HepG2 (cell line): ENCODE measurements at regions of chr19 and their contacts with region 1.

Region 1: DNA sequence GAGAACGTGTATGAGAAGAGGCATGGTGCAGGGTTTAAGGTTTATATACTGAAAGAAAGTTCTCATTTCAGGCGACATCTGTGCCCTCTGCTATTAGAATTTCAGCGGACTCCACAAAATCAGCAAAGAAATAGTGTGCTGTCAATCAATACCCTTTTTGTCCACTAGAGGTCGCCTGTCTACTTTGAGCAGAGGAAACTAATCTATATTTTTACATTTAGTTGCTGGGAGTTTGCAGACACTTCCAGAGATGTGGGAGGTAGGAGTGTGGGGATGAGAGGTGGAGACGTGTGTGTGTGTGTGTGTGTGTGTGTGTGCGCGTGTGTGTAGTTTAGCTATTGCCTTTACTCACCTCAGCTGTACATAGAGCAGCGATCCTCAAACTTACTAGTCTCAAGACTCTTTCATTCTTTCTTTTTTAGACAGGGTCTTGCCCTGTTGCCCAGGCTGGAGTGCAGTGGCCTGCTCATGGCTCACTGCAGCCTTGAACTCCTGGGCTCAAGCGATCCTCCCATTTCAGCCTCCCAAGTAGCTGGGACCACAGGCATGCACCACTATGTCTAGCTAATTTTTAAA is 9.7 kb downstream of the INAFM1 start:
- DNase-seq: peak; percentile 53
- ATAC-seq: peak; percentile 60; the same call in 2 of the 3 replicates
- H3K4me3 ChIP-seq: no peak overlapping the region
- H3K27ac ChIP-seq: no peak overlapping the region
- H3K4me1 ChIP-seq: peaks cover 11% of the 10 kb centered on the region
- H3K27me3 ChIP-seq: no peaks in the 10 kb centered on the region
- CTCF ChIP-seq: peak; percentile 75
- EP300 ChIP-seq: no peak
- POLR2A ChIP-seq: no peak
- RAD21 ChIP-seq: no peak

Region 2: GRCh38 chr19:47305309-47305751 is 20.9 kb after region 1 on chr19:
- CTCF ChIA-PET with region 1: no interaction called
- POLR2A ChIA-PET with region 1: no interaction called
- in situ Hi-C with region 1: no loop called
- intact Hi-C with region 1: no loop called
- DNase-seq: peak; percentile 81
- ATAC-seq: peak; percentile 76
- H3K4me3 ChIP-seq: peak overlapping the region in 1 of 3 experiments; percentile 13; a peak in 1 of 6 replicates
- H3K27ac ChIP-seq: peak overlapping the region; percentile 32
- H3K4me1 ChIP-seq: peaks cover 27% of the 10 kb centered on the region
- H3K27me3 ChIP-seq: 0 out of 5 replicates have a peak, but pooled peaks cover 0 to 1% of the 10 kb centered on the region in 2 experiments
- CTCF ChIP-seq: peak; percentile 91
- EP300 ChIP-seq: peak in 1 of 2 experiments; percentile 13; a peak in 1 of 4 replicates
- POLR2A ChIP-seq: no peak
- RAD21 ChIP-seq: peak; percentile 35; the same call in 1 of the 2 replicates

Region 3: DNA sequence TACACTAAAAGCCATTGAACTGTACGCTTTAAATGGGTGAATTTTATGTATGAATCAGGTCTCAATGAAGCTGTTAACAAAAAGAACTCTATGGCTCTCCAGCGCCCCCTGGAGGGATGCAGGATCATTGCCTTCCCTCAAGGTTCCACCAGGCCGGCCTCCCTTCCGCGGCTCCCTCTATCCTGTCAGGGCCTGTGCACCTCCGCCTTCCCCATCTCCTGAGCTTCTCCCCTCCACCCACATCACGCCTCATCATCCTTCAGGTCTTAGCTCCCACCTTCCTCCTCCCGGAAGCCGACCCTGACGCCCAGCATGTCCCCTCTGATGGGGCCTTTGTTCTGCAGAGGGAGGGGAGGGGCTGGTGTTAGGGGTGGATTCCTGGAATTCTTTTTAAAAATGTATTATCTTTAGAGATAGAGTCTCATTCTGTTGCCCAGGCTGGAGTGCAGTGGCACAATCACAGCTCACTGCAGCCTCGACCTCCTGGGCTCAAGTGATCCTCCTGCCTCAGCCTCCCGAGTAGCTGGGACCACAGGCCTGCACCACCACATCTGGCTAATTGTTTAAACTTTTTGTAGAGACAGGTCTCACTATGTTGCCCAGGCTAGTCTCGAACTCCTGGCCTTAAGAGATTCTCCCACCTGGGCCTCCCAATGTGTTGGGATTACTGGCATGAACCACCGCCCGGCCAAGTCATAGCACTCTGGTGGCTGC is 107.3 kb after region 1 on chr19:
- CTCF ChIA-PET with region 1: interaction called, 15 read pairs
- POLR2A ChIA-PET with region 1: no interaction called
- in situ Hi-C with region 1: no loop called
- intact Hi-C with region 1: no loop called
- DNase-seq: peak; percentile 58
- ATAC-seq: peak; percentile 89
- H3K4me3 ChIP-seq: no peak overlapping the region
- H3K27ac ChIP-seq: no peak overlapping the region
- H3K4me1 ChIP-seq: no peaks in the 10 kb centered on the region
- H3K27me3 ChIP-seq: peaks cover 0 to 13% of the 10 kb centered on the region in 2 experiments; a peak in 2 of 5 replicates
- CTCF ChIP-seq: peak; percentile 84
- EP300 ChIP-seq: no peak
- POLR2A ChIP-seq: no peak
- RAD21 ChIP-seq: peak; percentile 70

Region 4: DNA sequence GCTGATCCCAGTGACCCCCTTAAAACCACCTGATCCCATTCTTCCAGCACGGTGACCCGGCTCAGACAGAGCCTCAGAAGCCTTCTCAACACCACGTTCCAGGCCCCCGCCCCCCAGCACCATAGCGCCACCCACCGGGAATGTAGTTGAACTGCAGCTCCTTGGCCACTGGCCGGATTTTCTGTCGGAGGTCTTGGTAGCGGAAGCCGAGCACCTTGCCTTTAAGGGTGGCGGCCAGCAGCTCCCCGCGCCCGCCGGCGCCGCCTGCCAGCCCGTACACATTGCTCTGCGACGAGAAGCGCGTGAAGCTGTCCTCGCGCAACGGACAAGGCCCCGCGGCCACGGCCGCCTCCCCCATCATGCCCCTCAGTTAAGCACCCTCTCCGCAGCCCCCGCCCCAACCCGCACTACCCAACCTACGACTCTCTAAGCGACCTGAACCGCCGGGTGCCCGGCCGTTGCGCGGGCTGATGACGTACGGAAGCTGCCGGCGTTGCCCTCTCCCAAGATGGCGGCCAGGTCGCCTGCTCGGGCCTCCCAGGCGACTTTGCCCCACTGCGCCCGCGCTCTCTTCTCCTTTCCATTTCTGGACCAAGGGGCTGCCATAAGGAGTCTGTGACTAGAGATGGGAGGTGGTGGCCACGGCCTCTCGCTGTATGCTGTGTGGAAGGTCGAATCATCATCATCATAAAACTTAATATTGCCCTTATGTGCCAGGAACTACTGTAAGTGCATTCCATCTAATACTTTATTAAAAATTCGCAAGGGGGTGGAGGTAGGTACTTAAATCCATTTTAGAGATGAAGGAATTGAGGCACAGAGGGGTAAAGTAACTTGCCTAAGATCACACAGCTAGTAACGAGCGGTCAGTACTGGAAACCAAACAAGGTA is 199.6 kb after region 1 on chr19 and contains the start of gene KPTN:
- CTCF ChIA-PET with region 1: no interaction called
- POLR2A ChIA-PET with region 1: no interaction called
- in situ Hi-C with region 1: no loop called
- intact Hi-C with region 1: no loop called
- DNase-seq: peak; percentile 77
- ATAC-seq: peak; percentile 86
- H3K4me3 ChIP-seq: peak within 1 kb of the TSS; percentile 86 to 98 (median 87)
- H3K27ac ChIP-seq: peak within 1 kb of the TSS; percentile 87
- H3K4me1 ChIP-seq: peaks cover 12% of the 10 kb centered on the region
- H3K27me3 ChIP-seq: no peaks in the 10 kb centered on the region
- CTCF ChIP-seq: peak; percentile 98
- EP300 ChIP-seq: peak in 1 of 2 experiments; percentile 54; a peak in 1 of 4 replicates
- POLR2A ChIP-seq: peak; percentile 70 to 82
- RAD21 ChIP-seq: peak; percentile 68
- total RNA-seq, gene KPTN: 8.4 and 9.1 TPM in 2 replicates